Mammary epithelial cell (primary cell): ENCODE measurements at regions of chr2 and their contacts with region 1.

Region 1: DNA sequence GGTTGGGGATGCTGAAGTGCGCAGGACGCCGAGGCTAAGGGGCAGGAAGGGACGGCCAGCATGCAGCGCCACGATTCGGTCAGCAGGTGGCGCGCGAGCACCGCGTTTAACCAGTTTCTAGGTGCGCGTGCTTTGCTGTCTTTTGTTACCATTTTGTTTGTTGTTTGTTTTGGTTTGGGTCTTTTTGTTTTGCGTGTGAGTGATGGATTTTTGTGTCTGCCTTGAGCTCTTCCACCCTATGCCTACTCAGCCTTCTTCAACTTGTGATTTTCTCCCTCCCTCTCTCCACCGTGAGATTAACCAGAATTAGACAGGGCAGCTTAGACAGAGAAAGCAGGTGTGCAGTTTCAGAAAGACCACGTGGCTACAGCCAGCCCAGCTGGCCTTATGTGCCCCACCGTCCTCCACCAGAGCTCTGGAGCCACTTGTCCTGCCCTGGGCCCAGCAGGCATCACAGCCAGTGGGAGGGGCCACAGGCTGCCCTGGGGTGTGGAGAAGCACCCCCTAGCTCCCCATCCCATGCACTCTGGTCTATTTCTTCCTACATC is 180.2 kb downstream of the RNF144A start:
- DNase-seq: peak; percentile 42
- H3K4me3 ChIP-seq: no peak overlapping the region
- H3K27ac ChIP-seq: no peak overlapping the region
- H3K4me1 ChIP-seq: peaks cover 3% of the 10 kb centered on the region
- H3K27me3 ChIP-seq: no peaks in the 10 kb centered on the region
- CTCF ChIP-seq: peak; percentile 94 to 97

Region 2: GRCh38 chr2:6883448-6884122 is 213.8 kb before region 1 on chr2:
- CTCF ChIA-PET with region 1: no interaction called
- dilution Hi-C with region 1: no loop called
- in situ Hi-C with region 1: no loop called
- intact Hi-C with region 1: no loop called
- DNase-seq: no peak
- H3K4me3 ChIP-seq: no peak overlapping the region
- H3K27ac ChIP-seq: no peak overlapping the region
- H3K4me1 ChIP-seq: no peaks in the 10 kb centered on the region
- H3K27me3 ChIP-seq: no peaks in the 10 kb centered on the region
- CTCF ChIP-seq: no peak

Region 3: GRCh38 chr2:6999211-6999877 is 98.1 kb before region 1 on chr2:
- CTCF ChIA-PET with region 1: no interaction called
- dilution Hi-C with region 1: no loop called
- in situ Hi-C with region 1: no loop called
- intact Hi-C with region 1: no loop called
- DNase-seq: no peak
- H3K4me3 ChIP-seq: no peak overlapping the region
- H3K27ac ChIP-seq: no peak overlapping the region
- H3K4me1 ChIP-seq: no peaks in the 10 kb centered on the region
- H3K27me3 ChIP-seq: no peaks in the 10 kb centered on the region
- CTCF ChIP-seq: no peak

Region 4: DNA sequence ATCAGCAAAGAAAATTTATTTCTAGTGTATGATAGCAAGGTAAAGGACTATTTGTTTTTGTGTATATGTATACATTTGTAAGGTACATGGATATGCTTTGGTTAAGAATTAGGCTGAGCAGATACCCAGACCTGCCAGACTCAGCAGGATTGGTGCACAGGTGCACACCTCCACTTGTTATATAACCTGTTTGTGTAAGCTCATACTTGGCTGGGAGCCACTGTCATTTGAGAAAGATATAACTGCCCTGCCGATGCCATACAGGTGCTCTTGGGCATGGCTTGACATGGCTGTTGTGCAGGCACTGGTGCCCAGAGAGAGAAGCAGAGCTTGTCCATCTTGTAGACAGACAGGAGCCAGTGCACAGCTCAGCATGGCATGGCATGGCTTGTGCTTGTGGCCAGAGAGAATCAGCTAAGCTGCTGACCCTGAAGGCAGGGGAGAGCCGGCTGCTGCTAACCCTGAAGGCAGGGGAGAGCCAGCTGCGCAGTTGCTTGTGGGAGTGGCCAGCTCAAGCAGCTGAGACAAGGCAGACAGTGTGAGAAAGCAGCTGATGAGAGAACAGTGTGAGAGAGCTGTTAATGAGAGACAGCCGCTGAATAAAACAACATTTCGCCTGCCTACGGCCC is 43.7 kb before region 1 on chr2:
- CTCF ChIA-PET with region 1: no interaction called
- dilution Hi-C with region 1: no loop called
- in situ Hi-C with region 1: no loop called
- intact Hi-C with region 1: no loop called
- DNase-seq: no peak
- H3K4me3 ChIP-seq: no peak overlapping the region
- H3K27ac ChIP-seq: no peak overlapping the region
- H3K4me1 ChIP-seq: no peaks in the 10 kb centered on the region
- H3K27me3 ChIP-seq: peaks cover 2% of the 10 kb centered on the region
- CTCF ChIP-seq: no peak

Region 5: DNA sequence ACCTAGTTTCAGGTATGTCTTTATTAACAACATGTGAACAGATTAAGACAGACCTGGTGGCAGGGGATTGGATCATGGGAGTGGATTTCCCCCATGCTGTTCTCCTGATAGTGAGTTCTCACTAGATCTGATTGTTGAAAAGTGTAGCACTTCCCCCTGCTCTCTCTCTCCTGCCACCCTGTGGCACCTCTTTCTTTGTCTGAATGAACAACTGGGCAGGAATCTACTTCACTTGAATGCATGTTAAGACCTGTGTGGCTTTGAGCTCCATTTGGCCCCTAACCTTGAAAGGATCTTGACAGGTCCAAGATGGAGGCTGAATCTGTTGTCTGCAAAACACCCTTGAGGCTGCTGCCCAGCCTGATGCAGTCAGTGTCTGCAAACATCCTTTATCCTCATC is 14.2 kb after region 1 on chr2:
- CTCF ChIA-PET with region 1: interaction called, 4 read pairs
- dilution Hi-C with region 1: no loop called
- in situ Hi-C with region 1: no loop called
- intact Hi-C with region 1: loop called (anchors 2 kb)
- DNase-seq: peak; percentile 54
- H3K4me3 ChIP-seq: no peak overlapping the region
- H3K27ac ChIP-seq: no peak overlapping the region
- H3K4me1 ChIP-seq: no peaks in the 10 kb centered on the region
- H3K27me3 ChIP-seq: no peaks in the 10 kb centered on the region
- CTCF ChIP-seq: peak; percentile 15 to 55

Region 6: GRCh38 chr2:7363906-7364305 is 266.5 kb after region 1 on chr2:
- CTCF ChIA-PET with region 1: no interaction called
- dilution Hi-C with region 1: no loop called
- in situ Hi-C with region 1: no loop called
- intact Hi-C with region 1: loop called (anchors 5 kb)
- DNase-seq: no peak
- H3K4me3 ChIP-seq: no peak overlapping the region
- H3K27ac ChIP-seq: no peak overlapping the region
- H3K4me1 ChIP-seq: peaks cover 5% of the 10 kb centered on the region
- H3K27me3 ChIP-seq: no peaks in the 10 kb centered on the region
- CTCF ChIP-seq: peak in 1 of 2 donors; percentile 56

Region 7: DNA sequence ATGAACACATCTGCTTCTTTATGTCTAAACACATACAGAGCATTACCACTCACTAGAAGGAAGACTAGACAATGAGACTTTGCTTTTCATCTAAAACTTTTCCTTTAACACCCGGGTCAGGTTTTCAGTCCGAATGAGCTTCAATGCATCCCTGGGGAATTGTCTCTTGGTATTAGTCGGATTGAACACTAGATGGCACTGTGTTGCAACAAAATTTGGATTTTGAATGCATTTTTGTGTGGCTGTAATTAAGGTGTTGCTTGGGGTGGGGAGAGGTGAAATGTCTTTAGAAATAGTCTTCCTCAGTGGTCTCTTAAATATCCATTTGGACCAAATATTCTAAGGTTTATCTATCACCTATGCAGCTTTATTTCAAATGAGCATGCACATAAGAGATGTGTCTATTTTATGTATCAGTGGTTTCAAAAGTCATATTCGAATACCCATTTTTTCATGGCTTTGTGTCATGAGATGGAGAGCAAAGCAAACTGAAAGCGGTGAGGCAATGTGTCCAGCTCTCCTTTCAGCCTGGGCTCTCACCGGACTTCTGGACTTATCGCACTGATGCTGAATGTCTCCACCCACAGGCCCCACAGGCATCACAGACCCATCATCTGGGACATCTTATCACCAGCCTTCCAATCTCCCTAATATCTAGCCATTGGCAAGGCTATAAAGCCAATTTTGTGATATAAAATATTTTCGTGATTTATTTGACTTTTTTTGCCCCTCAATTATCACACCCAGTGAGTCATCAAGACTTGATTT is 330.1 kb after region 1 on chr2:
- CTCF ChIA-PET with region 1: no interaction called
- dilution Hi-C with region 1: no loop called
- in situ Hi-C with region 1: no loop called
- intact Hi-C with region 1: loop called (anchors 1 kb)
- DNase-seq: peak; percentile 37
- H3K4me3 ChIP-seq: no peak overlapping the region
- H3K27ac ChIP-seq: no peak overlapping the region
- H3K4me1 ChIP-seq: peaks cover 8% of the 10 kb centered on the region
- H3K27me3 ChIP-seq: peaks cover 2% of the 10 kb centered on the region
- CTCF ChIP-seq: peak; percentile 61 to 66

Region 8: GRCh38 chr2:7672027-7672684 is 574.7 kb after region 1 on chr2:
- CTCF ChIA-PET with region 1: no interaction called
- dilution Hi-C with region 1: no loop called
- in situ Hi-C with region 1: no loop called
- intact Hi-C with region 1: loop called (anchors 5 kb)
- DNase-seq: peak; percentile 24
- H3K4me3 ChIP-seq: no peak overlapping the region
- H3K27ac ChIP-seq: no peak overlapping the region
- H3K4me1 ChIP-seq: no peaks in the 10 kb centered on the region
- H3K27me3 ChIP-seq: no peaks in the 10 kb centered on the region
- CTCF ChIP-seq: peak; percentile 65 to 76

Region 9: DNA sequence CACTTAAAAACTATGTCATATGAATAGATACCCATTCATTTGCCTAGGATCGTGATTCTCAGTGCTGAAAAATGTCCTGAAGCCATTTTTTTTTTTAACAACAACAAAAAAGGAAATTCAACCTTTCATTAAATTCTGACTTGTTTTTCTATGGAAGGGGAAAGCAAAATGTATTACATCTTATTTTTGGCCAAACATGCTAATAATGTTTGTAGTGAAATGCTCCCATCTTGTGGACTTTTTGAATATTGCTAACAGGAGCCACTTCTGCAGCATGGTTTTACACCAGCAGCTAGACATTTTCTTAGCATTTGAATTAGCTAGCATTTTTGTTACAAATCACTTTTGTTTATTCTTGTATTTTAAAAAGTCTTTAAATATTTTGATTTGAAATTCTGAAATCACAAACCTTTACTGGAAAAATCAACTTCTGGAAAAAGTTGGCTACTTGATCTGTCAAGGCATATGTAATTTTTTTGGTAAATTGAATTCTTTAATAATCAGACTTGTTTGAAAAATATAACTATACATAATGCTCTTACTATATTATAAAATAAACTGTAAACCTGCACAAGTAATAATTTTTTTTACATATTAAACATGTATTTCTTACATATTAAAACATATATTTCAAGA is 1664.2 kb after region 1 on chr2:
- CTCF ChIA-PET with region 1: no interaction called
- dilution Hi-C with region 1: no loop called
- in situ Hi-C with region 1: no loop called
- intact Hi-C with region 1: loop called (anchors 1 kb)
- DNase-seq: peak; percentile 7
- H3K4me3 ChIP-seq: no peak overlapping the region
- H3K27ac ChIP-seq: no peak overlapping the region
- H3K4me1 ChIP-seq: no peaks in the 10 kb centered on the region
- H3K27me3 ChIP-seq: no peaks in the 10 kb centered on the region
- CTCF ChIP-seq: peak; percentile 44 to 53